CD4-positive, alpha-beta T cell (primary cell): ENCODE measurements at regions of chr12 and their contacts with region 1.

Region 1: DNA sequence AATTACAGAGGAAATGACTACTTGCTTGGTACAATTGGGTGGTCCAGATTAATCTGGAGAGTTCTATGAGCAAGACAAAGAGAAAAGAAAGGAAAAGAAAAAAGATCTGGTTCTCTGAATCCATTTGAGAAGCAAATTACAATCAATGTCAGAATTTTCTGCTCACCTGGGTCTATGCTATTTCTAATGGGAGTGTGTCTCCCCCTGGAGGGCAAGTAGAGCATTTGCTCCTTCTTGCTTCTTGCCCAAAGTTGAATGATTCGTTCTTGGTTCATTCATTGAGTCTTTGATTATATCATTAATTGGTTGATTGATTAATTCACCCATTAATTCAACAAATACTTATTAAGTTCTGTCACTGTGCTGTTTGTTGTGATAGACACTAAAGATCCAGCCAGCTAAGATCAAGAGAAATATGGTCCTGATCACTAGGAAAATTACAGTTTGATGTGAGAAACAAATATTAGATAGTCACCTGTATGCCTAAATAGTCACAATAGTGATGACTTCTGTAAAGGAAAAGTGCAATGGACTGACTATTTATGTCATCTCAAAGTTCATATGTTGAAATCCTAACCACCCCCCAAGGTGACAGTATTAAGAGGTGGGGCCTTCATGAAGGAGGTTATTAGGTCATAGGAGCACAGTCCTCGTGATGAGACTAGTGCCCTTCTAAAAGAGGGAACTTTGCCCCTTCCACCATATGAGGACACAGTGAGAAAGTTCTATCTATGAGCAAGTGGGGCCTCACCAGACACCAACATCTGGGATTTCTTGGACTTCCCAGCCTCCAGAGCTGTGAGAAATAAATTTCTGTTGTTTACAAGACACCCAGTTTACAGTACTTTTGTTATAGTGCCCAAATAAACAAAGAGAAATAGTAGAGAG is 8.0 kb upstream of the ASB8 start:
- DNase-seq: peak in 11 of 14 experiments; percentile 11 to 87 (median 44)
- ATAC-seq: peak; percentile 87
- H3K4me3 ChIP-seq: no peak overlapping the region
- H3K4me3 Mint-ChIP-seq: no peak overlapping the region
- H3K27ac ChIP-seq: no peak overlapping the region
- H3K27ac Mint-ChIP-seq: no peak overlapping the region
- H3K4me1 ChIP-seq: no peaks in the 10 kb centered on the region
- H3K4me1 Mint-ChIP-seq: peaks cover 7% of the 10 kb centered on the region
- H3K27me3 ChIP-seq: no peaks in the 10 kb centered on the region
- H3K27me3 Mint-ChIP-seq: peaks cover 20% of the 10 kb centered on the region
- CTCF ChIP-seq: peak; percentile 98

Region 2: DNA sequence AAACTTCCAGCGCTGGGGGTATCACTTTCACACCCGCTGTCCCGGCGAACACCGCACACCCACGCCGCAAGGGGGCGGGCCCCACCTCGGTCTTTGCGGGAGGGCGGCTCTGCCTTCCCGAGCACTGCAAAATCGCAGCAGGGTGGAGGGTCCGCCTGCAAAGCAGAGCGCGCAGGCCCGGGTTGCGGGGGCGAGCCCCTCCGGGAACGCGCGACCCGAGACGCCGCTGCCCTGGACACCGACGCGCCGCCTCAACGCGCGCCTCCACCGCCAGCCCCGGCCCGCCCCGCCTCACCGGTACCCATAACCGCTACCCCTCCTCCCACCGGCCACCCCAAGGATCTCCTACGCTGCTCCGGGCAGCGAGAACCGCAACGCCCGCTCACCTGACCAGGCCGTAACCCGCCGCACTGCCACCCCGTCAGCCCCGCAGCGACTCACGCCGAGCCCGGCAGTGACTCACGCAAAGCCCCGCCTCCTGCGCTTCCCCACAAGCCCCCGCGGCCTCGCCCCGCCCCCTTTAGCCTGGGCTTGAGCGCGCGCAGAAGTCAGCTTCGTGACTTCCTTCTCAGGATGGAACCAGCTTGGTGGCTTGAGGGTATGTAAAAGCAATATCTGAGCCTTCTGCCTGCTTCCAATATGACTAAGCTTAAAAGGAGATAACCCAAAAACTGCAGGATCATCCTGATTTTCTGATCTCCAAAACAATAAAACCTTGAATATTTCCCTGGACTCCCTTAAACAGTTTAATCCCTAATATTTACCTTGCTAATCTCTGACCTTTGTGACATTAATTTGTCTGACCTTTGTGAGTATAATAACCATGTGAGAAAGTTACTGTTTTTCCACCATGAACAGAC is 459.5 kb before region 1 on chr12 and contains the start of gene RPAP3:
- CTCF ChIA-PET with region 1: no interaction called
- POLR2A ChIA-PET with region 1: no interaction called
- intact Hi-C with region 1: no loop called
- DNase-seq: peak; percentile 92 to 99 (median 97)
- ATAC-seq: peak; percentile 93
- H3K4me3 ChIP-seq: peak within 1 kb of the TSS; percentile 77
- H3K4me3 Mint-ChIP-seq: peak within 1 kb of the TSS; percentile 99
- H3K27ac ChIP-seq: peak within 1 kb of the TSS; percentile 81
- H3K27ac Mint-ChIP-seq: peak within 1 kb of the TSS; percentile 94
- H3K4me1 ChIP-seq: peaks cover 37% of the 10 kb centered on the region
- H3K4me1 Mint-ChIP-seq: peaks cover 68% of the 10 kb centered on the region
- H3K27me3 ChIP-seq: no peaks in the 10 kb centered on the region
- H3K27me3 Mint-ChIP-seq: no peaks in the 10 kb centered on the region
- CTCF ChIP-seq: peak; percentile 76
- total RNA-seq, gene RPAP3: 24.6 to 26.4 TPM

Region 3: GRCh38 chr12:47941851-47942601 is 223.3 kb before region 1 on chr12:
- CTCF ChIA-PET with region 1: no interaction called
- POLR2A ChIA-PET with region 1: no interaction called
- intact Hi-C with region 1: loop called (anchors 2 to 5 kb)
- DNase-seq: peak in 13 of 14 experiments; percentile 14 to 70 (median 43)
- ATAC-seq: peak; percentile 48
- H3K4me3 ChIP-seq: no peak overlapping the region
- H3K4me3 Mint-ChIP-seq: no peak overlapping the region
- H3K27ac ChIP-seq: no peak overlapping the region
- H3K27ac Mint-ChIP-seq: no peak overlapping the region
- H3K4me1 ChIP-seq: peaks cover 3% of the 10 kb centered on the region
- H3K4me1 Mint-ChIP-seq: no peaks in the 10 kb centered on the region
- H3K27me3 ChIP-seq: peaks cover 4 to 10% of the 10 kb centered on the region in 2 experiments
- H3K27me3 Mint-ChIP-seq: peaks cover 18% of the 10 kb centered on the region
- CTCF ChIP-seq: peak; percentile 26

Region 4: GRCh38 chr12:47963340-47964040 is 201.8 kb before region 1 on chr12 and contains the start of gene TMEM106C:
- CTCF ChIA-PET with region 1: interaction called, 5 read pairs
- POLR2A ChIA-PET with region 1: no interaction called
- intact Hi-C with region 1: loop called (anchors 2 to 5 kb)
- DNase-seq: peak; percentile 84 to 97 (median 90)
- ATAC-seq: peak; percentile 97
- H3K4me3 ChIP-seq: peak within 1 kb of the TSS; percentile 85
- H3K4me3 Mint-ChIP-seq: peak within 1 kb of the TSS; percentile 95
- H3K27ac ChIP-seq: no peak within 1 kb of the TSS
- H3K27ac Mint-ChIP-seq: peak within 1 kb of the TSS; percentile 81
- H3K4me1 ChIP-seq: peaks cover 17% of the 10 kb centered on the region
- H3K4me1 Mint-ChIP-seq: peaks cover 38% of the 10 kb centered on the region
- H3K27me3 ChIP-seq: peaks cover 0 to 5% of the 10 kb centered on the region in 2 experiments
- H3K27me3 Mint-ChIP-seq: peaks cover 6% of the 10 kb centered on the region
- CTCF ChIP-seq: peak; percentile 97
- total RNA-seq, gene TMEM106C: 17.4 to 20.3 TPM

Region 5: DNA sequence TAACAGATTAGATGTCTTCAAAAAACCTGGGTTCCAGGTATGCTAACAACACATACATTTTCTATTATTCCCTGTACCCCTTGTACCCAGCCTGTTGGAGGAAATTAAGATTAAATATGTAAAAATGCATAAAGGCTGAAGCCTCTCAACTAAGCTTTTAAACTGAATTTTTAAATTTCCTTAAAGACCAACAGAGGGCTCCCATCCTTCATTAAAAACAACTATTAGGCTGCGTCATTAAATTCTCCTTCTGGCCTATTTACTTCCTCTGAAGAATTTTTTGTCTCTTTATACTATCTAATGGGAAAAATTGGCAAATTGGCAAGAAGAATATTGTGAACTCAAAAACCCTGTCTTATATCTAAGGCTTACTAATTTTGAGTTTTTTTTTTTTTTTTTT is 81.3 kb before region 1 on chr12:
- CTCF ChIA-PET with region 1: interaction called, 9 read pairs
- POLR2A ChIA-PET with region 1: no interaction called
- intact Hi-C with region 1: loop called (anchors 1 to 2 kb)
- DNase-seq: peak in 2 of 14 experiments; percentile 27 to 37
- ATAC-seq: no peak
- H3K4me3 ChIP-seq: no peak overlapping the region
- H3K4me3 Mint-ChIP-seq: no peak overlapping the region
- H3K27ac ChIP-seq: no peak overlapping the region
- H3K27ac Mint-ChIP-seq: no peak overlapping the region
- H3K4me1 ChIP-seq: no peaks in the 10 kb centered on the region
- H3K4me1 Mint-ChIP-seq: no peaks in the 10 kb centered on the region
- H3K27me3 ChIP-seq: no peaks in the 10 kb centered on the region
- H3K27me3 Mint-ChIP-seq: no peaks in the 10 kb centered on the region
- CTCF ChIP-seq: peak; percentile 17

Region 6: GRCh38 chr12:48175613-48176416 is 10.5 kb after region 1 on chr12:
- CTCF ChIA-PET with region 1: interaction called, 17 read pairs
- POLR2A ChIA-PET with region 1: no interaction called
- intact Hi-C with region 1: no loop called
- DNase-seq: no peak
- ATAC-seq: no peak
- H3K4me3 ChIP-seq: no peak overlapping the region
- H3K4me3 Mint-ChIP-seq: no peak overlapping the region
- H3K27ac ChIP-seq: no peak overlapping the region
- H3K27ac Mint-ChIP-seq: no peak overlapping the region
- H3K4me1 ChIP-seq: no peaks in the 10 kb centered on the region
- H3K4me1 Mint-ChIP-seq: peaks cover 8% of the 10 kb centered on the region
- H3K27me3 ChIP-seq: no peaks in the 10 kb centered on the region
- H3K27me3 Mint-ChIP-seq: peaks cover 45% of the 10 kb centered on the region
- CTCF ChIP-seq: no peak

Region 7: GRCh38 chr12:48779869-48780268 is 614.5 kb after region 1 on chr12:
- CTCF ChIA-PET with region 1: no interaction called
- POLR2A ChIA-PET with region 1: no interaction called
- intact Hi-C with region 1: no loop called
- DNase-seq: no peak
- ATAC-seq: no peak
- H3K4me3 ChIP-seq: no peak overlapping the region
- H3K4me3 Mint-ChIP-seq: no peak overlapping the region
- H3K27ac ChIP-seq: no peak overlapping the region
- H3K27ac Mint-ChIP-seq: no peak overlapping the region
- H3K4me1 ChIP-seq: no peaks in the 10 kb centered on the region
- H3K4me1 Mint-ChIP-seq: no peaks in the 10 kb centered on the region
- H3K27me3 ChIP-seq: peaks cover 0 to under 1% of the 10 kb centered on the region in 2 experiments
- H3K27me3 Mint-ChIP-seq: peaks cover 3% of the 10 kb centered on the region
- CTCF ChIP-seq: no peak